ENCODE measurements at regions of chr4 and their contacts with region 1.

Region 1: DNA sequence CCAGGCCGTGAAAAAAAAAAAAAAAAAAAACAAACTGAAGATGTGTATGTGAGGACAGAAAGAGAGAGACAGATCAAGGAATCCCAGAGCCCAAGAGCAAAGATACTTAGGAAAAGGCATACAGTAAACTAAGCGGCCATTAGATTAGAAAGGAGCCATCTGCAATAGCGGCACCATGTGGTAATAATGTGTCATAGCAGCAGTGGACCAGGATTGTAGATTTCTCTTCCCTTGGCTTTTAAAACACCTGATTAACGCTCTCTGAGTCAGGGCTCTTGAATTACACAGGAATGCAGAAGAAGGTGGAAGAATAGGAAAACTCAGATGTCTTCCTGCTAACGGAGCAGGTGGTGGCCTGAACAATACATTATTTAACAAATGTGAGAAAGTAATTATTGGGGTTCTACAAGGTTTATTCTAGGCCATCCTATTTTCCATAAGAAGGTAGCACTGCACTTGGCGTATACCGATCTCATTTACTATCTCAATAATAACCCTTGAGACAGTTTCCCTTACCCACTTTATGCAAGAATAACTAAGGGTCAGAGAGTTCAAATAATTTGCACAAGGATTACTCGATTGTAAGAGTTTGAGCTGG is 182.7 kb downstream of the KCNIP4 start:
- DNase-seq: peak; percentile 38
- ATAC-seq: 0 out of 2 replicates have a peak, but pooled peaks have one; percentile 62
- H3K4me3 ChIP-seq: no peak overlapping the region
- H3K27ac ChIP-seq: no peak overlapping the region
- H3K4me1 ChIP-seq: no peaks in the 10 kb centered on the region
- H3K27me3 ChIP-seq: no peaks in the 10 kb centered on the region
- CTCF ChIP-seq: peak; percentile 80

Region 2: DNA sequence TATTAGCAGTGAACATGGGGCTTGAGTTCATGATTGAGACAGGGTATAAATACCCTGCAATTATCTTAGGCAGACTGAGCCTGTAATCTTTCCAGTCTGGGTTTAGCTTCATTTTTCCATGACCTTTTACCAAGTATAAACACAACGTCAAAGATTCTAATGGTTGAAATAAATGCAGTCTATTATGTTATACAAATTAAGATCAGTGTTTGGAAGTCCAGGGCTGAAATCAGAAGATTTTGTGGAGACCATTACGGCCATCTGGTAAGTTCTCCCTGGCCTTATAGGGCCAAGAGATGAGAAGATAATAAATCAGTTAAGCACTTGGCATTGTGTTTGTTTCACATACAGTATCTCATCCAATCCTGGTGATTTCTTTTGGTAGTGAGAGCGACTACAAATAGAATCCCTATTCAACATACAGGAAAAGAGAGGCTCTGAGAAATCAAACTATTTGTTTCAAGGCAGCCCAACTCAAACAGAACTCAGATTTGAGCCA is 639.8 kb before region 1 on chr4:
- CTCF ChIA-PET with region 1: no interaction called
- POLR2A ChIA-PET with region 1: no interaction called
- in situ Hi-C with region 1: no loop called
- intact Hi-C with region 1: no loop called
- DNase-seq: no peak
- ATAC-seq: no peak
- H3K4me3 ChIP-seq: no peak overlapping the region
- H3K27ac ChIP-seq: no peak overlapping the region
- H3K4me1 ChIP-seq: no peaks in the 10 kb centered on the region
- H3K27me3 ChIP-seq: no peaks in the 10 kb centered on the region
- CTCF ChIP-seq: no peak

Region 3: GRCh38 chr4:21512353-21512752 is 253.6 kb before region 1 on chr4:
- CTCF ChIA-PET with region 1: interaction called, 4 read pairs
- POLR2A ChIA-PET with region 1: no interaction called
- in situ Hi-C with region 1: no loop called
- intact Hi-C with region 1: loop called (anchors 1 kb)
- DNase-seq: no peak
- ATAC-seq: peak; percentile 58; the same call in 1 of the 2 replicates
- H3K4me3 ChIP-seq: no peak overlapping the region
- H3K27ac ChIP-seq: no peak overlapping the region
- H3K4me1 ChIP-seq: no peaks in the 10 kb centered on the region
- H3K27me3 ChIP-seq: no peaks in the 10 kb centered on the region
- CTCF ChIP-seq: peak; percentile 39; the same call in 1 of the 2 replicates

Region 4: DNA sequence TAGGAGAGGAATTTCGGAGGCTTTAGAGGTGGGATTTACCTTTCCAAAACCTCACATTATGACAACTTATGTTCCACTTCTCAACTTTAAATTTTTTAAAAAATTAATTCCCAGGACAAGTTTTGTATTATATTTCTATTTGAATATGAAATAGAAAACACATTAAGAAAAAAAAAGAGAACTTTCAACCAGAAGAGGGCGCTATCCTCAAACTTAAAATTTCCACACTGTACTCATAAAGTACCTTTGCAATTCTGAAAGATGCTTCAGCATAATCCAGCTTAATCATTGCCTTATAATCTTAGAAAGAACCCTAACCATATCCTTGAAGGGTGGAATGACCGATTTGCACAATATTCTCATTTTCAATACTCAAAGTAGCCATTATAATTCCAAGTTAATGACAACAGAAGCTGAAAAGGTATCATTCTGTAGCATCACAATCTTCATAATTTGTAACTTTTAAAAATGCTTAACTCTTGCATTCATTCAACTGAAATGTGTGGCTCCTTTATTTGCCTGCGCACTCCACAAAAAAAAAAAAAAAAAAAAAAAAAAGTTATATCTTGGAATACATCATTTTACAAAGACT is 24.6 kb after region 1 on chr4:
- CTCF ChIA-PET with region 1: no interaction called
- POLR2A ChIA-PET with region 1: no interaction called
- in situ Hi-C with region 1: no loop called
- intact Hi-C with region 1: no loop called
- DNase-seq: no peak
- ATAC-seq: no peak
- H3K4me3 ChIP-seq: no peak overlapping the region
- H3K27ac ChIP-seq: no peak overlapping the region
- H3K4me1 ChIP-seq: no peaks in the 10 kb centered on the region
- H3K27me3 ChIP-seq: no peaks in the 10 kb centered on the region
- CTCF ChIP-seq: peak; percentile 30; the same call in 1 of the 2 replicates